ENCODE measurements at regions of chr9 and their contacts with region 1.

Region 1: GRCh38 chr9:129139993-129140396 is 28.8 kb downstream of the PTPA start:
- DNase-seq: peak; percentile 90
- ATAC-seq: peak; percentile 84
- H3K4me3 Mint-ChIP-seq: peak overlapping the region; percentile 75
- H3K27ac Mint-ChIP-seq: peak overlapping the region; percentile 93
- H3K4me1 Mint-ChIP-seq: peaks cover 50% of the 10 kb centered on the region
- H3K27me3 Mint-ChIP-seq: no peaks in the 10 kb centered on the region

Region 2: GRCh38 chr9:129093421-129094204 is 46.4 kb before region 1 on chr9:
- CTCF ChIA-PET with region 1: no interaction called
- POLR2A ChIA-PET with region 1: no interaction called
- DNase-seq: no peak
- ATAC-seq: no peak
- H3K4me3 Mint-ChIP-seq: no peak overlapping the region
- H3K27ac Mint-ChIP-seq: peak overlapping the region; percentile 46
- H3K4me1 Mint-ChIP-seq: no peaks in the 10 kb centered on the region
- H3K27me3 Mint-ChIP-seq: no peaks in the 10 kb centered on the region

Region 3: DNA sequence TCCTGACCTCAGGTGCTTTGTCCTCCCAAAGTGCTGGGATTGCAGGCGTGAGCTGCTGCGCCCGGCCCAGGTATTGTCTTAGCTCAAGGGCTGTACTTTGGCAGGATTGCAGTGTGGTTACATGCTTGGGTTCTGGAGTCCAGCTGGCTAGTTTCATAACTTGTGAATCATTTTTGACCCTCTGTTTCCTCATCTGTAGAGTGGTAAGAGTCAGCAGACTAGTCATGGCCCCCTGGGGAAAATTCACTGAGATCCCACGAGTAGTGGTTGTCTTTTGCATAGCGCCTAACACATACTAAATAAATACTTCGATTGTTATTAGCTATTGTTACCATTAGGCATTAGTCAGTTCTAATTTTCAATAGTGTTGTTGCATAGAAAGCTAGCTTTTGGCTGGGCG is 14.5 kb before region 1 on chr9:
- CTCF ChIA-PET with region 1: interaction called, 154 read pairs
- POLR2A ChIA-PET with region 1: interaction called, 3 read pairs
- DNase-seq: no peak
- ATAC-seq: no peak
- H3K4me3 Mint-ChIP-seq: no peak overlapping the region
- H3K27ac Mint-ChIP-seq: no peak overlapping the region
- H3K4me1 Mint-ChIP-seq: no peaks in the 10 kb centered on the region
- H3K27me3 Mint-ChIP-seq: no peaks in the 10 kb centered on the region

Region 4: GRCh38 chr9:129150672-129151211 is 10.7 kb after region 1 on chr9:
- CTCF ChIA-PET with region 1: interaction called, 28 read pairs
- POLR2A ChIA-PET with region 1: no interaction called
- DNase-seq: no peak
- ATAC-seq: no peak
- H3K4me3 Mint-ChIP-seq: no peak overlapping the region
- H3K27ac Mint-ChIP-seq: no peak overlapping the region
- H3K4me1 Mint-ChIP-seq: peaks cover 8% of the 10 kb centered on the region
- H3K27me3 Mint-ChIP-seq: no peaks in the 10 kb centered on the region

Region 5: DNA sequence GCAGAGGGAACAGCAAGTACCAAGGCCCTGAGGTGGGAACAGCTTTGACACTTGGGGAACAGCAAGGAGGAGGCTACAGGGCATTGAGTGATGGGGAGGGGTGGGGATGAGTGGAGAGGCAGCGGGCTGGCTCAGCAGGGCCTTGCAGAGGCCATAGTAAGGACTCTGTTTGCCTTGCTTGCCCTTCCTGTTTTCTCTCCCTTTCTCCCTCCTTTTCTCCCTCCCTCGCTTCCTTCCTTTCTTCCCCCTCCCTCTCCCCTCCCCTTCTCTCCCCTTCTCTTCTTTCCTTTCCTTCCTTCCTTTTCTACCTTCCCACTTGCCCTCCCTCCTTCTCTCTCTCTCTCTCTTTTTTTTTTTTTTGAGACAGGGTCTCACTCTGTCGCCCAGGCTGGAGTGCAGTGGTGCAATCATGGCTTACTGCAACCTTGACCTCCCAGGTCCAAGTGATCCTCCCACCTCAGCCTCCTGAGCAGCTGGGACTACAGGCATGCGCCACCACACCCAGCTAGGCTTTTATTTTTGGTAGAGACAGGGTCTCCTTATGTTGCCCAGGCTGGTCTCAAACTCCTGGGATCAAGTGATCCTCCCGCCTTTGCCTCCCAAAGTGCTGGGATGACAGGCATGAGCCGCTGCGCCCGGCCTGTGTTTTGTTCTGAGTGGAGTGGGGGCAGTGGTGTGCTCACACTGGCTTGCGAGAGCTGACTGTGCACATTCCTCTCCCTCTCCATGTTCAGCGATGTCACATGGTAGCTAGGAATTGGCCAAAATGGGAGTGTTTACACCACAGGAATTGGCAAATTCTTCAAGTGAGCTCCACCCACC is 20.9 kb after region 1 on chr9:
- CTCF ChIA-PET with region 1: interaction called, 36 read pairs
- POLR2A ChIA-PET with region 1: no interaction called
- DNase-seq: no peak
- ATAC-seq: no peak
- H3K4me3 Mint-ChIP-seq: no peak overlapping the region
- H3K27ac Mint-ChIP-seq: no peak overlapping the region
- H3K4me1 Mint-ChIP-seq: no peaks in the 10 kb centered on the region
- H3K27me3 Mint-ChIP-seq: no peaks in the 10 kb centered on the region

Region 6: GRCh38 chr9:129166623-129167557 is 26.9 kb after region 1 on chr9:
- CTCF ChIA-PET with region 1: interaction called, 190 read pairs
- POLR2A ChIA-PET with region 1: interaction called, 3 read pairs
- DNase-seq: peak; percentile 35
- ATAC-seq: peak; percentile 55
- H3K4me3 Mint-ChIP-seq: peak overlapping the region; percentile 56
- H3K27ac Mint-ChIP-seq: peak overlapping the region; percentile 55
- H3K4me1 Mint-ChIP-seq: peaks cover 39% of the 10 kb centered on the region
- H3K27me3 Mint-ChIP-seq: peaks cover 1% of the 10 kb centered on the region

Region 7: GRCh38 chr9:129333953-129334724 is 194.1 kb after region 1 on chr9:
- CTCF ChIA-PET with region 1: interaction called, 12 read pairs
- POLR2A ChIA-PET with region 1: no interaction called
- DNase-seq: peak; percentile 47
- ATAC-seq: peak; percentile 37
- H3K4me3 Mint-ChIP-seq: peak overlapping the region; percentile 19
- H3K27ac Mint-ChIP-seq: peak overlapping the region; percentile 75
- H3K4me1 Mint-ChIP-seq: peaks cover 27% of the 10 kb centered on the region
- H3K27me3 Mint-ChIP-seq: peaks cover 4% of the 10 kb centered on the region

Region 8: GRCh38 chr9:129610473-129611301 is 470.7 kb after region 1 on chr9:
- CTCF ChIA-PET with region 1: interaction called, 39 read pairs
- POLR2A ChIA-PET with region 1: interaction called, 3 read pairs
- DNase-seq: peak; percentile 79
- ATAC-seq: peak; percentile 78
- H3K4me3 Mint-ChIP-seq: peak overlapping the region; percentile 58
- H3K27ac Mint-ChIP-seq: peak overlapping the region; percentile 43
- H3K4me1 Mint-ChIP-seq: peaks cover 49% of the 10 kb centered on the region
- H3K27me3 Mint-ChIP-seq: peaks cover 2% of the 10 kb centered on the region